ENCODE measurements at regions of chr4 and their contacts with region 1.

Region 1: DNA sequence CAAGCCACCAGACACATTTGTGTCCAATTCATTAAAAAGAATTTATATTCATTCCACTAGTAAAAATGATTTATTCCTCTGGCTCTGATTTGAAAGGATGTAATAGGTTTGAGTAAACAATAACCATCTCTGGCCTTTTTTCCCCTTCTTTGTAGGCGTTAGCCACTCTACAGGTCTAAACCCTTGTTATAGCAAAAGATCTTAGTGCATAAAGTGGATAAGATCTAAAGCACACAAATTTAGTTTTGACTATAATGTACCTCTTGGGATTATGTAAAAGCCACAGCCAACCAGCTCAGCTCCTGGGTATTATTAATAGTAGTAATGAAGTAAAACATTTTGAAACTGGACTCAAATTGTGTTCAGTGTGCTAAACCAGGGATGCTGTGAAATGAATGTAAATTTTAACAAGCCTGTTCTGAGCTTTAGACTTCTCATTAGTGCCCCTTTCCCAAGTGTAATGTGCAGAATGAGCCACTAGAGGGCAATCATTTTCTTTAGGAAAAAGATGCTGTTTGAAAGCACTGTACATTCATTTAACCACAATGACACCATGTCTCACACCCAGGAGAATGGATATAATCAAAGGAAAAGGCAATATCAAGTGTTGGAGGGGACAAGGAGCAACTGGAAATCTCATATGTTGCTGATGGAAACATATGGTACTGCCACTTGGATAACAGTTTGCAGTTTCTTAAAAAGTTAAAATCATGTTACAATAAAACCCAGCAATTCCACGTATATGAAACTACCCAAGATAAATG is 69.7 kb downstream of the KLHL8 start:
- DNase-seq: peak; percentile 76
- ATAC-seq: peak; percentile 86
- H3K4me3 ChIP-seq: no peak overlapping the region
- H3K4me3 Mint-ChIP-seq: no peak overlapping the region
- H3K27ac ChIP-seq: no peak overlapping the region
- H3K27ac Mint-ChIP-seq: no peak overlapping the region
- H3K4me1 ChIP-seq: no peaks in the 10 kb centered on the region
- H3K4me1 Mint-ChIP-seq: no peaks in the 10 kb centered on the region
- H3K27me3 ChIP-seq: no peaks in the 10 kb centered on the region
- H3K27me3 Mint-ChIP-seq: no peaks in the 10 kb centered on the region
- CTCF ChIP-seq: peak; percentile 96

Region 2: GRCh38 chr4:87166296-87166854 is 15.7 kb after region 1 on chr4:
- CTCF ChIA-PET with region 1: interaction called, 15 read pairs
- POLR2A ChIA-PET with region 1: no interaction called
- intact Hi-C with region 1: no loop called
- DNase-seq: no peak
- ATAC-seq: no peak
- H3K4me3 ChIP-seq: no peak overlapping the region
- H3K4me3 Mint-ChIP-seq: no peak overlapping the region
- H3K27ac ChIP-seq: no peak overlapping the region
- H3K27ac Mint-ChIP-seq: no peak overlapping the region
- H3K4me1 ChIP-seq: no peaks in the 10 kb centered on the region
- H3K4me1 Mint-ChIP-seq: no peaks in the 10 kb centered on the region
- H3K27me3 ChIP-seq: no peaks in the 10 kb centered on the region
- H3K27me3 Mint-ChIP-seq: no peaks in the 10 kb centered on the region
- CTCF ChIP-seq: no peak

Region 3: GRCh38 chr4:87209696-87210095 is 59.0 kb after region 1 on chr4:
- CTCF ChIA-PET with region 1: interaction called, 10 read pairs
- POLR2A ChIA-PET with region 1: no interaction called
- intact Hi-C with region 1: no loop called
- DNase-seq: peak; percentile 75
- ATAC-seq: peak; percentile 93
- H3K4me3 ChIP-seq: peak overlapping the region in 4 of 5 experiments; percentile 34 to 75 (median 48)
- H3K4me3 Mint-ChIP-seq: peak overlapping the region; percentile 85
- H3K27ac ChIP-seq: peak overlapping the region; percentile 3 to 56
- H3K27ac Mint-ChIP-seq: peak overlapping the region; percentile 83
- H3K4me1 ChIP-seq: peaks cover 7 to 11% of the 10 kb centered on the region in 2 donors
- H3K4me1 Mint-ChIP-seq: peaks cover 16% of the 10 kb centered on the region
- H3K27me3 ChIP-seq: no peaks in the 10 kb centered on the region
- H3K27me3 Mint-ChIP-seq: no peaks in the 10 kb centered on the region
- CTCF ChIP-seq: no peak

Region 4: GRCh38 chr4:87228262-87228860 is 77.7 kb after region 1 on chr4:
- CTCF ChIA-PET with region 1: interaction called, 161 read pairs
- POLR2A ChIA-PET with region 1: no interaction called
- intact Hi-C with region 1: no loop called
- DNase-seq: no peak
- ATAC-seq: no peak
- H3K4me3 ChIP-seq: no peak overlapping the region
- H3K4me3 Mint-ChIP-seq: no peak overlapping the region
- H3K27ac ChIP-seq: no peak overlapping the region
- H3K27ac Mint-ChIP-seq: no peak overlapping the region
- H3K4me1 ChIP-seq: no peaks in the 10 kb centered on the region
- H3K4me1 Mint-ChIP-seq: no peaks in the 10 kb centered on the region
- H3K27me3 ChIP-seq: no peaks in the 10 kb centered on the region
- H3K27me3 Mint-ChIP-seq: peaks cover 5% of the 10 kb centered on the region
- CTCF ChIP-seq: no peak

Region 5: GRCh38 chr4:87235020-87235671 is 84.5 kb after region 1 on chr4:
- CTCF ChIA-PET with region 1: interaction called, 161 read pairs
- POLR2A ChIA-PET with region 1: no interaction called
- intact Hi-C with region 1: loop called (anchors 1 kb)
- DNase-seq: peak; percentile 12
- ATAC-seq: no peak
- H3K4me3 ChIP-seq: peak overlapping the region in 4 of 5 experiments; percentile 35 to 66 (median 44)
- H3K4me3 Mint-ChIP-seq: peak overlapping the region; percentile 74
- H3K27ac ChIP-seq: no peak overlapping the region
- H3K27ac Mint-ChIP-seq: no peak overlapping the region
- H3K4me1 ChIP-seq: peaks cover 0 to 6% of the 10 kb centered on the region in 2 donors
- H3K4me1 Mint-ChIP-seq: peaks cover 4% of the 10 kb centered on the region
- H3K27me3 ChIP-seq: no peaks in the 10 kb centered on the region
- H3K27me3 Mint-ChIP-seq: peaks cover 5% of the 10 kb centered on the region
- CTCF ChIP-seq: no peak

Region 6: DNA sequence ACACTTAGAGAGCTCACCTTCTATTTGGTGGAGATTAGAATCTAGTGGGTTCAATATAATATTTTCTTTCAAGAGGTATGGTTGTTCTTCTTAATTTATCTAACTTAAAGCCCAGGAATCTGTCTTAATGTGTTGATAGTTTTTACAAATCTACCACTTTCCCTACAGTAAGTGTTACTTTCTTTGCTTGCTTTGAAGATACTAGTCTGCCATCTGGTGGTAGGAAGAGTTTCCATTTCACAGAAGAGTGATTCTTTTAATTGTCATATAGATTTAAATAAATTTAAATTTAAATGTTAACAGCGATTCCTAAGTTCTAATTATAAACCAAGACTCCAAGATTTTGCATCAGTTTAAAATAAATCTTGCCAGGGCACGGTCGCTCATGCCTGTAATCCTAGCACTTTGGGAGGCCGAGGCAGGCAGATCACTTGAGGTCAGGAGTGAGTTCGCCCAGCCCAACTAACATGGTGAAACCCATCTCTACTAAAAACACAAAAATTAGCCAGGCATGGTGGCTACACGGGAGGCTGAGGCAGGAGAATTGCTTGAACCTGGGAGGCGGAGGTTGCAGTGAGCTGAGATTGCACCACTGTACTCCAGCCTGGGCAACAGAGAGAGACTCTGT is 315.2 kb after region 1 on chr4:
- CTCF ChIA-PET with region 1: interaction called, 18 read pairs
- POLR2A ChIA-PET with region 1: no interaction called
- intact Hi-C with region 1: loop called (anchors 1 kb)
- DNase-seq: peak; percentile 59
- ATAC-seq: no peak
- H3K4me3 ChIP-seq: no peak overlapping the region
- H3K4me3 Mint-ChIP-seq: no peak overlapping the region
- H3K27ac ChIP-seq: no peak overlapping the region
- H3K27ac Mint-ChIP-seq: no peak overlapping the region
- H3K4me1 ChIP-seq: no peaks in the 10 kb centered on the region
- H3K4me1 Mint-ChIP-seq: no peaks in the 10 kb centered on the region
- H3K27me3 ChIP-seq: no peaks in the 10 kb centered on the region
- H3K27me3 Mint-ChIP-seq: no peaks in the 10 kb centered on the region
- CTCF ChIP-seq: peak; percentile 92

Region 7: DNA sequence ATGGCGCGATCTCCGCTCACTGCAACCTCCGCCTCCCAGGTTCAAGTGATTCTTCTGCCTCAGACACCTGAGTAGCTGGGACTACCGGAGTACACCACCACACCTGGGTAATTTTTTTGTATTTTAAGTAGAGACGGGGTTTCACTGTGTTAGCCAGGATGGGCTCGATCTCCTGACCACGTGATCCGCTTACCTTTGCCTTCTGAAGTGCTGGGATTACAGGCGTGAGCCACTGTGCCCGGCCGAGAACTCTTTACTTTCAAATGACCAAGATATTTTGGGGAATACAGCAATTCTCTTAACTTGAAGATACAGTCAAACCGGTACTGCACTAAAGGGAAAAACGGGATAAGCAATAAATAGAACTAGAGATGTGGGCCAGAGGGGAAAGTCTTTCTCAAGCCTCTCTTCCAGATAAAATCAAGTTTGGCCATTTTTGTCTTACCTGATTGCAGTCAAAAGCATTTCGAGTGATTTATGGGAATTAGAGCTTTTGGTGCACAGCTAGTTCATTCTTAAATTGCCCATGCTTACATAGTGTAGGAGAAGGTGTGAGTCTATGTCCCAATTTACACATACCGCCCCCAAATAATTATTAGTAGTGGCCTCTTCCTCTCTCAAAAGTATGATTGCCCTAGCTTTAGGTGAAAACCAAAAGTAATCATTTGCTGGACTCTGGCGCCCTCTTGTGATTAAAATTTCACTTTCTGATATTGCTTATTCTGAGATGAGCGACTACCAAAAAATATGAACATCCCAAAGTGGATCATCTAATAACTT is 1061.0 kb after region 1 on chr4:
- CTCF ChIA-PET with region 1: no interaction called
- POLR2A ChIA-PET with region 1: no interaction called
- intact Hi-C with region 1: loop called (anchors 2 kb)
- DNase-seq: peak; percentile 73
- ATAC-seq: peak; percentile 57
- H3K4me3 ChIP-seq: no peak overlapping the region
- H3K4me3 Mint-ChIP-seq: no peak overlapping the region
- H3K27ac ChIP-seq: no peak overlapping the region
- H3K27ac Mint-ChIP-seq: no peak overlapping the region
- H3K4me1 ChIP-seq: no peaks in the 10 kb centered on the region
- H3K4me1 Mint-ChIP-seq: no peaks in the 10 kb centered on the region
- H3K27me3 ChIP-seq: peaks cover 0 to 2% (median 0%) of the 10 kb centered on the region in 4 experiments
- H3K27me3 Mint-ChIP-seq: no peaks in the 10 kb centered on the region
- CTCF ChIP-seq: peak; percentile 89